ENCODE measurements at regions of chr9 and their contacts with region 1.

Region 1: GRCh38 chr9:69867081-69867814 is 46.6 kb downstream of the CFAP95 start:
- DNase-seq: no peak
- ATAC-seq: no peak
- H3K4me3 ChIP-seq: no peak overlapping the region
- H3K27ac ChIP-seq: no peak overlapping the region
- H3K4me1 ChIP-seq: no peaks in the 10 kb centered on the region
- H3K27me3 ChIP-seq: no peaks in the 10 kb centered on the region
- CTCF ChIP-seq: no peak
- POLR2A ChIP-seq: no peak
- RAD21 ChIP-seq: no peak

Region 2: GRCh38 chr9:69718218-69718617 is 149.0 kb before region 1 on chr9:
- CTCF ChIA-PET with region 1: no interaction called
- POLR2A ChIA-PET with region 1: no interaction called
- RAD21 ChIA-PET with region 1: no interaction called
- intact Hi-C with region 1: no loop called
- DNase-seq: no peak
- ATAC-seq: no peak
- H3K4me3 ChIP-seq: no peak overlapping the region
- H3K27ac ChIP-seq: no peak overlapping the region
- H3K4me1 ChIP-seq: no peaks in the 10 kb centered on the region
- H3K27me3 ChIP-seq: no peaks in the 10 kb centered on the region
- CTCF ChIP-seq: no peak
- POLR2A ChIP-seq: no peak
- RAD21 ChIP-seq: no peak

Region 3: DNA sequence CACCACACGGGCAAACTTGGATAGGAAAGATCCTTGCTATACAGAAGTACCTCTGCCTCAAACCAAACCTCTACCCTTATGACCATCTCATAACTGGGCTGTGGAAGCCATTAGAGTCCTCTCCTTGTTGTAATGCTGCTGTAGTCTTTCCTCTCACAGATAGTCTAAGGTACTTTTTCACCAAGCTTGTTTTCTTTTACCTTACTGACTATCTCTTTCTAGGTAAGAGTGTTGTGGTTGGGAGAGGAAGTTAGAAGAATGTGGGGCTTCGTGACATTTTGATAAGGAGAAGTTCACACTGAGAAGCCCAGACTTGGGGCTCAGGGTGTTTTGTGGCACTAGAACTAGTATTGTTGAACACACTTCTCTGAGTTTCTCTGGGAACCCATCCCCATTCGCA is 37.8 kb before region 1 on chr9:
- CTCF ChIA-PET with region 1: no interaction called
- POLR2A ChIA-PET with region 1: no interaction called
- RAD21 ChIA-PET with region 1: no interaction called
- intact Hi-C with region 1: loop called (anchors 5 kb)
- DNase-seq: no peak
- ATAC-seq: no peak
- H3K4me3 ChIP-seq: no peak overlapping the region
- H3K27ac ChIP-seq: no peak overlapping the region
- H3K4me1 ChIP-seq: no peaks in the 10 kb centered on the region
- H3K27me3 ChIP-seq: no peaks in the 10 kb centered on the region
- CTCF ChIP-seq: no peak
- POLR2A ChIP-seq: no peak
- RAD21 ChIP-seq: no peak

Region 4: GRCh38 chr9:69996967-69997366 is 129.7 kb after region 1 on chr9:
- CTCF ChIA-PET with region 1: no interaction called
- POLR2A ChIA-PET with region 1: no interaction called
- RAD21 ChIA-PET with region 1: no interaction called
- intact Hi-C with region 1: no loop called
- DNase-seq: no peak
- ATAC-seq: no peak
- H3K4me3 ChIP-seq: no peak overlapping the region
- H3K27ac ChIP-seq: no peak overlapping the region
- H3K4me1 ChIP-seq: no peaks in the 10 kb centered on the region
- H3K27me3 ChIP-seq: no peaks in the 10 kb centered on the region
- CTCF ChIP-seq: no peak
- POLR2A ChIP-seq: no peak
- RAD21 ChIP-seq: no peak